ENCODE measurements at regions of chr19 and their contacts with region 1.

Region 1: GRCh38 chr19:39655613-39656012 is at the start of gene LGALS16:
- DNase-seq: no peak
- ATAC-seq: no peak
- H3K4me3 ChIP-seq: no peak within 1 kb of the TSS
- H3K4me3 Mint-ChIP-seq: no peak within 1 kb of the TSS
- H3K27ac ChIP-seq: no peak within 1 kb of the TSS
- H3K27ac Mint-ChIP-seq: no peak within 1 kb of the TSS
- H3K4me1 ChIP-seq: no peaks in the 10 kb centered on the region
- H3K4me1 Mint-ChIP-seq: no peaks in the 10 kb centered on the region
- H3K27me3 ChIP-seq: no peaks in the 10 kb centered on the region
- H3K27me3 Mint-ChIP-seq: peaks cover 27% of the 10 kb centered on the region
- CTCF ChIP-seq: no peak
- total RNA-seq, gene LGALS16: not detected

Region 2: DNA sequence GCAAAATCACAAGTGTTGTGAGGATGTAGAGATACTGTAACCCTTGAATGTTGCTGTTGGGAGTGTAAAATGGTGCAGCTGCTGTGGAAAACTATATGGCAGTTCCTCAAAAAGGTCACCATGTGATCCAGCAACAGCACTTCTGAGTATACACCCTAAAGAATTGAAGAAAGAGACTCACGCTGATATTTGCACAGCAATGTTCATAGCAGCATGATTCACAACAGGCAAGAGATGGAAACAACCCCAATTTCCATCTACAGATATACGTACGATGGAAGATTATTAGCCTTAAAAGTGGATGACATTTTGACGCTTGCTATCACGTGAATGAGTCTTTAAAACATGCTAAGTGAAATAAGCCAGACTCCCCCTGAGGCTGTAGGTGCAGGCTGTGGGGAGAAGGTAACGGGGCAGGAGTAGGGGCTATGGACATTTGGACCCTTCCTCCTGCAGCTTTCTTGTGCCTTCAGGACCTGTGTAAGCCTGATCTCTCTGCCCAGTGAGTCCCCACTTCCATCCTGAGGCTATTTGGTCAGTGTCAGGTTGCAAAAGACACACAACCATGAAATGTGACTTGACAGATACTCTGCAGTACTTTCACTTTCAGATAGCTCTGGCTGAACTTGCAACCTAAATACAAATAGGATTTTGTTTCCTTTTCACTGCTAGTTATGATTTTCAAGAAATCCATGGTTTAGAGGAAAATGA is 98.0 kb before region 1 on chr19:
- CTCF ChIA-PET with region 1: no interaction called
- POLR2A ChIA-PET with region 1: no interaction called
- intact Hi-C with region 1: loop called in 1 of 2 experiments (anchors 5 kb)
- DNase-seq: no peak
- ATAC-seq: peak; percentile 38
- H3K4me3 ChIP-seq: peak overlapping the region; percentile 2 to 25
- H3K4me3 Mint-ChIP-seq: peak overlapping the region; percentile 68
- H3K27ac ChIP-seq: peak overlapping the region in 1 of 2 experiments; percentile 72
- H3K27ac Mint-ChIP-seq: peak overlapping the region; percentile 75
- H3K4me1 ChIP-seq: peaks cover 16% of the 10 kb centered on the region
- H3K4me1 Mint-ChIP-seq: peaks cover 19% of the 10 kb centered on the region
- H3K27me3 ChIP-seq: no peaks in the 10 kb centered on the region
- H3K27me3 Mint-ChIP-seq: no peaks in the 10 kb centered on the region
- CTCF ChIP-seq: no peak

Region 3: DNA sequence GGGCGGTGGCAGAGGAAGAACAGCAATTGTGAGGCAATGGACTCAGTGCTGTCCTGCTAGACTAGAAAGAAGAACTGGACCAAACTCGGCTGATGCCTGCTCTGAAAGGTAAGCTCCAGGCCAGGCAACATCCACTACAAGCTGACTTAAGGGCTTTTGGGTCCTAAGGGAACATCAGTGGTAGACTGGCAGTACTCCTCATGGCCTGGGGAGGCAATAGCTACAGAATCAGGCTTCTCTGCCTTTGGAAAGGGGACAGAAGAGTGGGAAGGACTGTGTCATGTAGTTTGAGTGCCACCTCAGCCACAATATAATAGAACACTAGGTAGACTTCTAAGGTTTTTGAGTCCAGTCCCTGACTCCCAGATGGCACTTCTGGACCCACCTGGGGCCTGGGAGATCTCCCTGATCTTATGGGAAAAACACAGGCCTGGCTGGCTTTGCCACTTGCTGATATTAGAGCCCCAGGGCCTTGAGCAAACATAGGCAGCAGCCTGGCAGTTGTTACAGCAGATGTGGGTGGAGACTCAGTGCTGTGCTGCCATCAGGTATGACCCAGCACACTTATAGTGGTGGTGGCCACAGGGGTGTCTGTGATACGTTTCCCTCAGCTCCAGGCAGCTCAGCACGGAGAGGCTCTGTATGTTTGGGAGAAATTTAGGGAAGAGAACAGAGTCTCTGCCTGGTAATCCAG is 91.4 kb after region 1 on chr19:
- CTCF ChIA-PET with region 1: no interaction called
- POLR2A ChIA-PET with region 1: no interaction called
- intact Hi-C with region 1: no loop called
- DNase-seq: no peak
- ATAC-seq: no peak
- H3K4me3 ChIP-seq: no peak overlapping the region
- H3K4me3 Mint-ChIP-seq: no peak overlapping the region
- H3K27ac ChIP-seq: no peak overlapping the region
- H3K27ac Mint-ChIP-seq: no peak overlapping the region
- H3K4me1 ChIP-seq: no peaks in the 10 kb centered on the region
- H3K4me1 Mint-ChIP-seq: no peaks in the 10 kb centered on the region
- H3K27me3 ChIP-seq: no peaks in the 10 kb centered on the region
- H3K27me3 Mint-ChIP-seq: peaks cover 34% of the 10 kb centered on the region
- CTCF ChIP-seq: no peak